Activated CD4-positive, alpha-beta T cell treated with anti-CD3 and anti-CD28 coated beads for 36 hours (primary cell): ENCODE measurements at regions of chr6 and their contacts with region 1.

Region 1: GRCh38 chr6:106281088-106281487 is 44.5 kb downstream of the ATG5 start:
- DNase-seq: no peak
- ATAC-seq: peak; percentile 31
- H3K4me3 Mint-ChIP-seq: no peak overlapping the region
- H3K27ac Mint-ChIP-seq: peak overlapping the region; percentile 37
- H3K4me1 Mint-ChIP-seq: peaks cover 30% of the 10 kb centered on the region
- H3K27me3 Mint-ChIP-seq: no peaks in the 10 kb centered on the region

Region 2: GRCh38 chr6:106244931-106245330 is 36.2 kb before region 1 on chr6:
- CTCF ChIA-PET with region 1: no interaction called
- POLR2A ChIA-PET with region 1: no interaction called
- intact Hi-C with region 1: loop called in 1 of 2 experiments (anchors 5 kb)
- DNase-seq: no peak
- ATAC-seq: no peak
- H3K4me3 Mint-ChIP-seq: no peak overlapping the region
- H3K27ac Mint-ChIP-seq: no peak overlapping the region
- H3K4me1 Mint-ChIP-seq: peaks cover 17% of the 10 kb centered on the region
- H3K27me3 Mint-ChIP-seq: no peaks in the 10 kb centered on the region